OCI-LY7 (cell line): ENCODE measurements at regions of chr3 and their contacts with region 1.

Region 1: GRCh38 chr3:114213627-114214541 is 23.5 kb downstream of the ZNF80 start:
- DNase-seq: peak; percentile 93
- H3K4me3 ChIP-seq: peak overlapping the region; percentile 69
- H3K27ac ChIP-seq: peak overlapping the region; percentile 99
- H3K4me1 ChIP-seq: peaks cover 54% of the 10 kb centered on the region
- CTCF ChIP-seq: peak; percentile 70

Region 2: GRCh38 chr3:113531826-113532697 is 681.8 kb before region 1 on chr3 and contains the start of gene SIDT1:
- CTCF ChIA-PET with region 1: no interaction called
- POLR2A ChIA-PET with region 1: no interaction called
- intact Hi-C with region 1: loop called (anchors 10 kb)
- DNase-seq: peak; percentile 76
- H3K4me3 ChIP-seq: peak within 1 kb of the TSS; percentile 74
- H3K27ac ChIP-seq: peak within 1 kb of the TSS; percentile 64
- H3K4me1 ChIP-seq: peaks cover 22% of the 10 kb centered on the region
- CTCF ChIP-seq: no peak
- total RNA-seq, gene SIDT1: 10.3 and 10.4 TPM in 2 replicates

Region 3: DNA sequence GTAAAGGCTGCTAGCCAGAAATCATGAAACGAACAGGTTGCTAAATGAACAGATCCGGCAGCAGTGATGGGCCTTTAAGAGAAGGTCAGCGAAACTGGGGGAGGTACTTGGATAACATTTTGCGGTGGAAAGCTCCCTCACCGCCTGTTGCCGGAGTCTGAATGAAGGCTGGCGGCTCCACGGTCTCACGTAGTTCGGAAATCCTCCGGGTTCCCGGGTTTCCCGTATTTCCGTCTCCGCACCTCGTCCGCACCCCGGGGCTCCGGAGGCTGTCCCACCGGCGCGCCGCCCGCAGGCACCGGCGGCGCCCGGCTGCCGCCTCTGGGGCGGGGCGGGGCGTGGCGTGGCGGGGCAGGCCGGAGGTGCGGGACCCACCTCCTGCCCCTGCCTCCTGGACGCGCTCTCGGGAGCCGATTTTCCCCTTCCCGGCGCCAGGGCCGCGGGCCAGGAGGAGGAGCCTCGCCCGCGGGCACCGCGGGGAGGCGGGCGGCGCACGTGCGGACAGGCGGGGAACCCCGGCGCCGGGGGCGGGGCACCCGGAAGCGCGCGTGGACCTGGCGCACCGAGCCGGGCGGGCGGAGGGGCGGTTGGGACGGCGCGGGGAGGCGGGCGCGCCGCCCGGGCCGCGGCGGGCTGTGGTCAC is 266.4 kb before region 1 on chr3 and contains the start of gene ZDHHC23:
- CTCF ChIA-PET with region 1: no interaction called
- POLR2A ChIA-PET with region 1: interaction called, 10 read pairs
- intact Hi-C with region 1: loop called (anchors 2 kb)
- DNase-seq: peak; percentile 75
- H3K4me3 ChIP-seq: peak within 1 kb of the TSS; percentile 84
- H3K27ac ChIP-seq: peak within 1 kb of the TSS; percentile 58
- H3K4me1 ChIP-seq: peaks cover 27% of the 10 kb centered on the region
- CTCF ChIP-seq: no peak
- total RNA-seq, gene ZDHHC23: 36.9 and 37.5 TPM in 2 replicates

Region 4: DNA sequence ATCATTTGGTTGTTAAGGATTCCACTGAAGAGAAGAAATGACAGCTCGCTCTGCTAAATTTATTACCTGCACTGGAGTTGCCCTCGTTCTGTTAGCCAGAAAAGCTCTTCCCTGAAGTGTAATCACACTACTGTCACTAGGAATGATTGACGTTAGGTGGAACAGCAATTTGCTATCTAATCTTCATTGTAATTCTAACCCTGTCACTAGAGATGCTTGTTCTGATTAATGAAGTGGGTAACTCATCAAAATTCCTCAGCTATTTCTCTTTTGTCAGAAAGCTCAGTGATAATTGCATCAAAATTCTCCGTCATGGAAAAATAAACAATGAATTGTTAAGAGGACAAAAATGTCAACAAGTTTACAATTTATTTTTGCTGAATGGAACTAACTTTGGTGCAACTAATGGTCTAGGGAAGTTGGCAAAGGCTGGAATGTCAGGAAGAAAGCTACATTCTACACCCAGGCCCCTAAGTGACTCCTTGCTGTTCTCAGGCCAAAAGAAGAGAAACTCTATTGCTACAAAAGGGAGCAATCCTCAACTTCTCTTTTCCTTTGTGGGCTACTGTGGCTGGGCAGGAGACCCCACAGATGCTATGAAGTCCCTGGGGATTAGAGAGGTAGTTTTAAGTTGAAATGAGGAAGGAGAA is 191.6 kb before region 1 on chr3:
- CTCF ChIA-PET with region 1: no interaction called
- POLR2A ChIA-PET with region 1: no interaction called
- intact Hi-C with region 1: no loop called
- DNase-seq: no peak
- H3K4me3 ChIP-seq: no peak overlapping the region
- H3K27ac ChIP-seq: no peak overlapping the region
- H3K4me1 ChIP-seq: no peaks in the 10 kb centered on the region
- CTCF ChIP-seq: no peak

Region 5: DNA sequence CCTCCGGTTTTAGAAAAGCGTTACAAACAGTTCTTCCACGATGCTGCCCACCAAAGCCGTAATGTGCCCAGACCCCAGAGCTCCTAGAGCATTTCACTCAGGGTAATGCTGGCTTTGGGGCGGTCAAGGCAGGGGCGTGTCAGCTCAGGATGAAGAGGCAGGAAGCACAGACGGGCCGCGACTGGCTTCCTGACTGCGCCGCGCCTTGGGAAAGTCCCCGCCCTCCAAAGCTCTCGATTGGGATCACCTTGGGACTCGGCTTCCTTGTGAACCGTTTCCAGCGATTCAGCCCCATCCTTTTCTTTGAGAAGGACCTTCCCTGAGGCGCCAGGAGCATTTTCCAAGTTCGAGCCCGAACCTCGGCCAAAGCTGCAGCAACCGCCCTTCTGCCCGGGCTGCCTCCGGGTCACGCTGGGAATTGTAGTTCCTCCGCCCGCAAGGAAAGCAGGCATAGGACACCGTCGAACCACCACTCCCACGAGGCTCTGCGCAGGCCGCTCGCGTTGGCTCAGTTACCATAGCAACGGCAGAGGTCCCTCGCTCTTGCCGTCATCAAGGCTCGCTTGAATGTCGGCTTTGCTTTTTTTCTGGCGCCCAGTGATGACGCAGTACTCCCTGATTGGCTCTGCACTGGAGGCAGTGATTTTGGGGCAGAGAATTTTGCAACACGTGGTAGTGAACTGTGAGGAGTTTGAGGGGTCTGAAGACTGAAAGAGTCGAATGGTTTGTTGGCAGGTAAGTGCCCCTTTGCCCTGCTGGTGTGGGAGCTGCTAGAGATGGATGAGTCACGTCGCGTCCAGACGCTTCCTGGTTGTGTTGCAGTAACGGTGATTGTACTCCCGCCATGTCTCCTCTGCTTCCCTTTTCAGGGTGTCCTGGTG is 157.5 kb before region 1 on chr3 and contains the starts of genes CCDC191 and QTRT2:
- CTCF ChIA-PET with region 1: no interaction called
- POLR2A ChIA-PET with region 1: interaction called, 3 read pairs
- intact Hi-C with region 1: loop called (anchors 5 kb)
- DNase-seq: peak; percentile 100
- H3K4me3 ChIP-seq: peak within 1 kb of the TSS; percentile 89
- H3K27ac ChIP-seq: peak within 1 kb of the TSS; percentile 69
- H3K4me1 ChIP-seq: peaks cover 40% of the 10 kb centered on the region
- CTCF ChIP-seq: no peak
- total RNA-seq, gene CCDC191: 5.0 and 5.4 TPM in 2 replicates
- total RNA-seq, gene QTRT2: 43.1 and 47.4 TPM in 2 replicates

Region 6: DNA sequence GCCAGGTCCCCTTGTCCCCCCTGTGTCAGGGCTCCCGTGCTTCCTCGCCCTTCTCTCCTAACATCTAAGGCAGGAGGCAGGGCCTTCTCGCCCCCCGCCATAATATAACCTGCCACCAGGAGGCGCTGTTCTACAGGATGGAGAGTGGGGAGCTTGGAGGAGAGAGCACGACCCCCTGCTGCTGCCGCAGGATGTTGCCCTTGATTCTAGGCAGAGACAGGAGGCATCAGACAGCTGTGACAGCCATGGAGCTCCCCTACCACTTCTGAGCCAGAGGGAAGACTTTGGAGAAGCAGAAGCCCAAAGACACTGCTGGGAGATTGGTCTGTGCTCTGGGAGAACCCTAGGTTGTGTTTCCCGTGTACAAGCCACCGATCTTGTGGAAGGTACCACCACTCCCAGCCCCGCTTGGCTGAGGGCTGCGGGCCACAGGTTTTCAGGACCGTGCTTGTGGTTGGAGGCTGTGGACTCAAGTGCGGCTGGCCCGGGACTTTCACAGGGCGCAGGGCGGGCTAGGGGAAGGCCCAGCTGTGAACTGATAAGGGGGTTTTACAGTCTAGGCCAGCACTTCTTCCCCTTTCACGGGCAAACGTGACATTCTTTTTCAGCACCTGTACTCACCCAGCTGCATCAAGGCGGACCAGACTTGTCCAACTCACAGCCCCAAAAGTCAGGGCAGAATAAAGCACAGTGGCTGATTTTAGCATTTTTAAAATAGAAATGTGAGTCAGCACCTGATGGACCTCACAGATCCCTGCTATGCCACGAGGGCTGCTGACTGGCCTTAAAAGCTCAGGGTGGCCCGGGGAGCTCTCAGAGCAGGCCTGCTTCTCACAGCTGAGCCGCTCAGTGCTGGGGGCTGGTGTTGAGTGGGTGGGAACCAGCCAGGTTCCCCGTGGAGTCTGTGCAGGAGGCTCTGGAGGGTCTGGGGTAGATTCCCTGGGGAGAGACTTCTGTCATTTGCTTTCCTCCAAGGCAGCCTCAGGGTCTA is 77.3 kb after region 1 on chr3:
- CTCF ChIA-PET with region 1: no interaction called
- POLR2A ChIA-PET with region 1: interaction called, 7 read pairs
- intact Hi-C with region 1: loop called (anchors 2 kb)
- DNase-seq: peak; percentile 84
- H3K4me3 ChIP-seq: no peak overlapping the region
- H3K27ac ChIP-seq: no peak overlapping the region
- H3K4me1 ChIP-seq: peaks cover 8% of the 10 kb centered on the region
- CTCF ChIP-seq: peak; percentile 92

Region 7: GRCh38 chr3:114454551-114455251 is 240.8 kb after region 1 on chr3:
- CTCF ChIA-PET with region 1: interaction called, 3 read pairs
- POLR2A ChIA-PET with region 1: interaction called, 4 read pairs
- intact Hi-C with region 1: loop called (anchors 1 kb)
- DNase-seq: peak; percentile 40
- H3K4me3 ChIP-seq: peak overlapping the region; percentile 70
- H3K27ac ChIP-seq: peak overlapping the region; percentile 40
- H3K4me1 ChIP-seq: peaks cover 77% of the 10 kb centered on the region
- CTCF ChIP-seq: peak; percentile 30; the same call in 1 of the 2 replicates

Region 8: DNA sequence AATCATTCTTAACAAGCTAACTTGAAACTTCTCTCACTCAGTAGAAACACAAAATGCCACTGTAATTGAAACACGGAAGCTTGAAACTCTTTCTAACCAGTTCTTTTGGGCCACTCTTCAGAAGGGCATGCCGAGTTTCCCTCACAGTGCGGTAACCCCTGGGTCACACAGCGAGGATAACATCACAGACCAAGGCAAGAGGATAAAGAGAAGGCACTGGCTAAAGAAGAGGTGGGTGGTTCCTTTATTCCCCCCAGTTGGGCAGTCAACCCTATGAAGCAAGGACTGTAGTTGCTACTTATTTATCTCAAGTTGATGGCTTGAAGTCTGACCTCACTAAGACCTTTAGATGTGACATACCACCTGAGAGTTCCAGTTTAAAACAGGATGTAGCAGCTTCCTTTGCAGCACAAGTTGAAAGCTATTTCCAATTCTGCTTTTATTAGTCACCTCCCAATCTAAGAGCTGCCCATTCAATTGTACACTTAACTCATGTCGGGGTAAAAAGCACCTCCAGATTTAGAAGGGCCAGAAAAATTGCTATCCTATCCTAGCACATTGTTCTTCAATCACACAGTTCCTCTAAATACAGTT is 352.4 kb after region 1 on chr3:
- CTCF ChIA-PET with region 1: no interaction called
- POLR2A ChIA-PET with region 1: no interaction called
- intact Hi-C with region 1: no loop called
- DNase-seq: no peak
- H3K4me3 ChIP-seq: no peak overlapping the region
- H3K27ac ChIP-seq: no peak overlapping the region
- H3K4me1 ChIP-seq: no peaks in the 10 kb centered on the region
- CTCF ChIP-seq: no peak